ENCODE measurements at regions of chr14 and their contacts with region 1.

Region 1: DNA sequence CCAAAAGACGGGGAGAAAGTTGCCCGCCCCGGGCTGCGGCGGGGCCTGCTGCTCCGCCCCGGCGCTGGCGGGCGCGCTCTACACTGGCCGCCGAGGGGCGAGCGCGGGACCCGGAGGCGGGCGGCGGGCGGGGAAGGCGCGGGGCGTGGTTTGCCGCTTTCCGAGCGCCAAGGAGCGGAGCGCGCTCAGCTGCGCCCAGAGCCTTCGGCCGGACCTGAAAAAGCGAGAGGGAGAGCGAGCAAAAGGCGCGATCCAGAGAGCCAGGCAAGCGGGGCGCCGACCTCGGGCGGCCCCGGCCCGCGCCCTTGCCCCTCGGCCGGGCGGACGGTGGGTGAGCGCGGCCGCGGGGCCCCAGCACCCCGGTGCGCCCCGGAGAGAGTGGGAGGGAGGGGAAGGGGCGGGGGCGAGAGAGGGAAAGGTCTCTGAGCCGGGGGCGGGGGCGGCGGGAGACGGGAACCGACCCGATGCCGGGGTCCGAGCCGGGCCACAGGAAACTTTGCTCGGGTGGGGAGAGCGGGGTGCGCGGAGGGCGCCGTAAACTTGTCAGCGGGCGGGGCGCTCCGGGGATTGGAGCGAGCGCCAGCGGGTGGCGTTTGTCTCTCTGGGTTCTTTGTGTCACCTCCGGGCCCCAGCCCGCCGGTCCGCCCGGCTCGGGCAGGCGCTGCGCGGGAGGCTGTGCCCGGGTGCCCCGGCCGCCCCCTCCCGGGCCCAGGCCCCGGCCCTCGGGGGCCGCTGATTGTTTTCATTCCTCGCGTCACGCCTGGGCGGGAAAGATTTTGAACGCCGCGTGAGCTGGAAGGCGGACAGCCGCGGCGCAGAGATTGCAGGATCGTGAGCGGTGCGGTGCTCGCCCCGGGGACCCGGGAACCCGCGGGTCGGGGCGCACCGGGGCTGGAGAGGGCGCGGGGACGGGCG is at the start of gene SYNE2:
- DNase-seq: peak; percentile 89
- ATAC-seq: peak; percentile 84
- H3K4me3 ChIP-seq: peak within 1 kb of the TSS; percentile 46 to 72 (median 64)
- H3K4me3 Mint-ChIP-seq: peak within 1 kb of the TSS; percentile 94
- H3K27ac ChIP-seq: peak within 1 kb of the TSS; percentile 30 to 43
- H3K27ac Mint-ChIP-seq: peak within 1 kb of the TSS; percentile 95
- H3K4me1 ChIP-seq: peaks cover 13 to 14% of the 10 kb centered on the region in 2 donors
- H3K4me1 Mint-ChIP-seq: peaks cover 27% of the 10 kb centered on the region
- H3K27me3 ChIP-seq: peaks cover 0 to 6% (median 0%) of the 10 kb centered on the region in 4 experiments
- H3K27me3 Mint-ChIP-seq: no peaks in the 10 kb centered on the region
- CTCF ChIP-seq: peak; percentile 33
- total RNA-seq, gene SYNE2: 105 TPM in 2 replicates

Region 2: GRCh38 chr14:63470962-63471793 is 381.9 kb before region 1 on chr14:
- CTCF ChIA-PET with region 1: no interaction called
- POLR2A ChIA-PET with region 1: no interaction called
- intact Hi-C with region 1: no loop called
- DNase-seq: no peak
- ATAC-seq: peak; percentile 28
- H3K4me3 ChIP-seq: no peak overlapping the region
- H3K4me3 Mint-ChIP-seq: no peak overlapping the region
- H3K27ac ChIP-seq: no peak overlapping the region
- H3K27ac Mint-ChIP-seq: no peak overlapping the region
- H3K4me1 ChIP-seq: peaks cover 0 to 10% of the 10 kb centered on the region in 2 donors
- H3K4me1 Mint-ChIP-seq: peaks cover 35% of the 10 kb centered on the region
- H3K27me3 ChIP-seq: no peaks in the 10 kb centered on the region
- H3K27me3 Mint-ChIP-seq: no peaks in the 10 kb centered on the region
- CTCF ChIP-seq: no peak

Region 3: DNA sequence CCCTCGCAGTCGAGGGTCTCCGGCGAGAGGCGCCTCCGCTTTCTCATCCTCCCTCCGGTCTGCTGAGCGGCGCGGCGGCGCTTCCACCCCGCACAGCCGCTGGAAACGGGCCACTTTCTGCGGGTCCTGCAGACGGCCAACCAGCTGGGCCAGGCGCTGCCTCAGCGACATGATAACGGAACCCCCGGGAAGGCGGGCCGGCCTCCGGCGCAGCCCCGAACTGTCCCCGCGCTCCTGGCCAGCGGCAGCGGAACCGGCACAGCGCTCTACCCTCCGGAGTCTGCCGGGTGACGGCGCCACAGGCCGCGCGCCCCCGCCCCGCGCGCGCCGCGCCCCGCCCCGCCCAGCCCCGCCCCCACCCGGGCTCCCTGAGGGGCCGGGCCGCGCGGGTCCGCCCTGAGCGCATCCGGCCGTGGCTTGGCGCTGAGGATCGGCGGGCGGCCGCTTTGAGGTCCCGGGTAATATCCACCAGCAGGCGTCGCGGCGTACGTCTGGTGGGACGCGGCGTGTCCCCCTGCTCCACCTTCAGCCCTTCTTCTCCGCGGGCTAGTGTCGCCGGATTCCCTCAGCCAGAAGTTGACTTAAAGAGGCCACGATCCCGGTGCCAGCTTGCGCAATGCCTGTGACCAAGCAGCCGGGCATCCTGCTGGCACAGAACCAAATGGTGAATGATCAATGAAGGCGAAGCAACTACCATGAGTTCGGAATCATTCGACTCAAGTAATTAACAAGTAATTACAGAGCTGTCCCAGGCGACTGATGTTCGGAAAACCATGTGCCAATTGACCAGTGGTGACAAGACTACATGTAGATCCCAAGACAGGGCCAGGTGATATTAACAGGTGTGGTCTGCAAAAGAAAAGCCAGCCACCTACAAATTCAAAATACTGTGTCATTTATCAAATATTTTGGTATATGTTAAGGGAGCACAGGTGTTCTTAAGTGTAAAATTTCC is 125.0 kb before region 1 on chr14 and contains the start of gene SGPP1:
- CTCF ChIA-PET with region 1: no interaction called
- POLR2A ChIA-PET with region 1: interaction called, 3 read pairs
- intact Hi-C with region 1: loop called (anchors 1 kb)
- DNase-seq: peak; percentile 92
- ATAC-seq: peak; percentile 92
- H3K4me3 ChIP-seq: peak within 1 kb of the TSS; percentile 79 to 95 (median 92)
- H3K4me3 Mint-ChIP-seq: peak within 1 kb of the TSS; percentile 100
- H3K27ac ChIP-seq: peak within 1 kb of the TSS; percentile 78 to 81
- H3K27ac Mint-ChIP-seq: peak within 1 kb of the TSS; percentile 97
- H3K4me1 ChIP-seq: peaks cover 20 to 29% of the 10 kb centered on the region in 2 donors
- H3K4me1 Mint-ChIP-seq: peaks cover 35% of the 10 kb centered on the region
- H3K27me3 ChIP-seq: no peaks in the 10 kb centered on the region
- H3K27me3 Mint-ChIP-seq: no peaks in the 10 kb centered on the region
- CTCF ChIP-seq: peak; percentile 49
- total RNA-seq, gene SGPP1: 44.3 and 46.4 TPM in 2 replicates

Region 4: DNA sequence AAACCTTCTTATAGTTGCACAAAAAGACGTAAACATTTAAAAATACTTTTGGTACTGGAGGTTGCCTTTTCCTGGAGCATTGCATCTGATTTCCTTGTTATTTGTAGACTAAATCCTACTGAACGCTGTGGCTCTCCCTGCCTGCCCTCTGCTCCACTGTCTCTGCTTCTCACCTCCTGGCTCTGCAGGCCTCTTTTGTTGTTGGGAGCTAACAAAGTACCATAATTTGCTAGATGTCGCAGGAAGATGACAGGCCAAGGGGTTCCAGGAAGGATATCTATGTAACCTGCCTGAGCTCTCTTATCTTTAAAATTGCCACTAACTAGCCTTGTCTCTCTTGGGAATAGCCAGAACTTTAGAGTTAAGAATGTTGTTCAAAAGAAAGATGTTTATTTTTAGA is 21.1 kb after region 1 on chr14:
- CTCF ChIA-PET with region 1: interaction called, 12 read pairs
- POLR2A ChIA-PET with region 1: no interaction called
- intact Hi-C with region 1: no loop called
- DNase-seq: no peak
- ATAC-seq: no peak
- H3K4me3 ChIP-seq: no peak overlapping the region
- H3K4me3 Mint-ChIP-seq: no peak overlapping the region
- H3K27ac ChIP-seq: no peak overlapping the region
- H3K27ac Mint-ChIP-seq: no peak overlapping the region
- H3K4me1 ChIP-seq: peaks cover 8 to 21% of the 10 kb centered on the region in 2 donors
- H3K4me1 Mint-ChIP-seq: peaks cover 34% of the 10 kb centered on the region
- H3K27me3 ChIP-seq: no peaks in the 10 kb centered on the region
- H3K27me3 Mint-ChIP-seq: no peaks in the 10 kb centered on the region
- CTCF ChIP-seq: no peak

Region 5: DNA sequence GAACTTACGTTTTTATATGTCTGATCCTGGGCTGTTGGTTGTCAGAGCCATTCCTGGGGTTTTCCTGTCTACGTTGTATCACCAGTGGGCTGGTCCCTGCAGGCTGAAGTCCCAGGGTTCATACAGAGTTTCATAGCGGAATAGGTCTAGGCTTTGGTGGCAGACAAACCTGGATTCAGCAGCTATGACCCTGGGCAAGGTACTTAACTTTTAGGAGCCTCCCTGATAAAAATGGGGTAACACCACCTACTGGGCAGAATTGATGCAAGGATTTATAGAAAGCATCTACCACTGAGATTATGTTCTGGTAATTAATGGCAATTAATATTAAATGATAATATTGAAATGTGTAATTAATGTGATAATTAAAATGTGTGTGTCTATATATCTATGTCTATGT is 140.9 kb after region 1 on chr14:
- CTCF ChIA-PET with region 1: no interaction called
- POLR2A ChIA-PET with region 1: no interaction called
- intact Hi-C with region 1: loop called (anchors 5 kb)
- DNase-seq: no peak
- ATAC-seq: no peak
- H3K4me3 ChIP-seq: no peak overlapping the region
- H3K4me3 Mint-ChIP-seq: no peak overlapping the region
- H3K27ac ChIP-seq: no peak overlapping the region
- H3K27ac Mint-ChIP-seq: no peak overlapping the region
- H3K4me1 ChIP-seq: peaks cover 3 to 4% of the 10 kb centered on the region in 2 donors
- H3K4me1 Mint-ChIP-seq: peaks cover 8% of the 10 kb centered on the region
- H3K27me3 ChIP-seq: no peaks in the 10 kb centered on the region
- H3K27me3 Mint-ChIP-seq: no peaks in the 10 kb centered on the region
- CTCF ChIP-seq: no peak

Region 6: GRCh38 chr14:64540208-64541157 is 687.4 kb after region 1 on chr14 and contains the start of gene HSPA2:
- CTCF ChIA-PET with region 1: no interaction called
- POLR2A ChIA-PET with region 1: no interaction called
- intact Hi-C with region 1: loop called (anchors 1 kb)
- DNase-seq: peak; percentile 98
- ATAC-seq: peak; percentile 90
- H3K4me3 ChIP-seq: peak within 1 kb of the TSS; percentile 74 to 98 (median 85)
- H3K4me3 Mint-ChIP-seq: peak within 1 kb of the TSS; percentile 100
- H3K27ac ChIP-seq: peak within 1 kb of the TSS; percentile 60 to 67
- H3K27ac Mint-ChIP-seq: peak within 1 kb of the TSS; percentile 97
- H3K4me1 ChIP-seq: peaks cover 26 to 32% of the 10 kb centered on the region in 2 donors
- H3K4me1 Mint-ChIP-seq: peaks cover 31% of the 10 kb centered on the region
- H3K27me3 ChIP-seq: peaks cover 0 to 19% (median 5%) of the 10 kb centered on the region in 4 experiments
- H3K27me3 Mint-ChIP-seq: peaks cover 5% of the 10 kb centered on the region
- CTCF ChIP-seq: peak; percentile 78
- total RNA-seq, gene HSPA2: 14.9 and 19.6 TPM in 2 replicates

Region 7: DNA sequence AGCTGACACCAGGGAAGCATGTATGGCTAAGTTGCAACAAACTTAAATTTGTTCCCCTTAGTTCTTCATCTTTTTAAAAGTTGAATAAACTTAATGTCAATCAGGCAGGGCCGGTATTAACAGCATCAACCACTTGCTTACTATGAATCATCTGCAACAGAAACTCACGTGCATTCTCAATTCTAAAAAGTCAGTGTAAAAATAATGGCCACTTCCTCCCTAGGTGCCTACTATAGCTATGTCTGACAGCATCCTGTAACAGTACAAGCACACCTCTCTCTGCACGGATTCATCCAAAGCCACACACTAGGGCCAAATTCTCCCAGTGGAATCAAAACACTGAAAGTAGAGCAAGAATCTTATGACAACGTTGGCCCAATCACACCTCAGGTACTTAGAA is 745.3 kb after region 1 on chr14:
- CTCF ChIA-PET with region 1: no interaction called
- POLR2A ChIA-PET with region 1: no interaction called
- intact Hi-C with region 1: no loop called
- DNase-seq: no peak
- ATAC-seq: no peak
- H3K4me3 ChIP-seq: no peak overlapping the region
- H3K4me3 Mint-ChIP-seq: no peak overlapping the region
- H3K27ac ChIP-seq: no peak overlapping the region
- H3K27ac Mint-ChIP-seq: no peak overlapping the region
- H3K4me1 ChIP-seq: no peaks in the 10 kb centered on the region
- H3K4me1 Mint-ChIP-seq: no peaks in the 10 kb centered on the region
- H3K27me3 ChIP-seq: no peaks in the 10 kb centered on the region
- H3K27me3 Mint-ChIP-seq: peaks cover 23% of the 10 kb centered on the region
- CTCF ChIP-seq: no peak

Measured in B cell (primary cell).